Spleen (tissue), 13 donors: ENCODE measurements at regions of chr22 and their contacts with region 1.

Region 1: DNA sequence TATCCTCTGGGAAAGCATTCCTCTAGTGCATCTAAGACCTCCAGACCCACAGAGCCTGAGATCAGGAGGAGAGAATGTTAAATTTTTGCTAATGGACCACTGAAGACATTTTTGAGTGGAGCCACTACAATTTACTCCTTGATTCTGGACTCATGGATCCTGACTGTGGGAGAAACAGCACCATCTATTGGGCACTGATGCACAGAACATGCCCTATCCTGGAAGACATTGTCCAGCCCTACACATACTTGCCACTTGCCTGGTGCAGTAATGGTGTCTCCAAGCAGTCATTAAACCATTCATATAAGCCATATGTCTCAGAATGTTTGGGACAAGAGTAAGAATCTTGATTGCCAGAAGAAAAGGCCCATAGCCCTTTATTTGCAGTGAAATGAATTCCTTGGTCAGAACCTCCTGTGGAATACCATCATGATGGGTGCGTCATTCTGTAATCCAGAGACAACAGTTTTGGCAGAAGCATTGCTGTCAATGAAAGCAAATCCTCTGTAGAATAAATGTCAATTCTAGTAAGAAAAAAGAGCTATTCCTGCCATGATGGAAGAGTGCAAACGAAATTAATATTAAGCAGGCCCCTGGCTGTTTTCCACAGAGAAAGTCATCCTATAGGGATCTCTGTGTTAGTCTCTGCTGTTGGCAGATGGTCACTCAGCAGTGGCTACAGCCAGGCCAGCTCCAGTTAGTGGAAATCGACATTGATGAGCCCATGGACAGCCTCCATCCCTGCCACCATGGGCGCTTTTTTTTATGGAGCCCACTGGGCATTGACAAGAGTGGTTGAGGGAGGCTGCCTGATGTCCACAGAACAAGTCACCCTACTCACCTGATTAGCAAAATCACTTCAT is 43.5 kb downstream of the GGTLC2 start:
- DNase-seq: no peak
- H3K4me3 ChIP-seq: no peak overlapping the region
- H3K27ac ChIP-seq: peak overlapping the region in 3 of 8 donors; percentile 41 to 67 (median 50)
- H3K4me1 ChIP-seq: peaks cover 2 to 51% (median 36%) of the 10 kb centered on the region in 6 donors
- H3K27me3 ChIP-seq: no peaks in the 10 kb centered on the region
- CTCF ChIP-seq: peak in 10 of 11 experiments; percentile 20 to 81 (median 66)
- POLR2A ChIP-seq: no peak

Region 2: DNA sequence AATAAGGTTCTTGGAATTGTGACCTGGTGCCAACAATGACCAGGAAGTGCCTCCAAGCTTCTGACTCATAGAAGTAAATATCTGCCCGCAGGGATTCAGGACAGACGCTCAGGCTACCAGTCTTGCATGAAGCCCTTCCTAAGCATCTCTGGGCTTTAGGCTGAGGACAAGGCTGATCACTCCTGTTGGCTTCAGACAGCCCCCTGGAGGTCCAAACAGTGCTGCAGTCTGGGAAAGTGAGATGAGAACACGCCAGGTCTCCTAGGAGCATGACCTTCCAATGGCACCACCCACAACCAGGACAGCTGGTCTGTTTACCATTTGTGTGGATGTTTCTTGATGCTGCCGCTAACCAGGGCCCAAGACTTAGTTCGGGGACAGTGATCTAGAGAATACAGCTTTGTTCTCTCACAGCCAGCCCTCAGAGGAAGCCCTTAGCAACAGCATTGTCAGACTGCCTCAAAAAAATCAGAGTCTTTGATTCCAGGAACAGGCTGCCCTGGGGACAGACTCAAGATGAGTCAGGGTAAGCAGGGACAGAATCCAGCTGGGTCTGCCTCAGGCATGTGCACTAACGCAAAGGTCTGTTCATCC is 290.5 kb before region 1 on chr22:
- intact Hi-C with region 1: no loop called
- DNase-seq: no peak
- H3K4me3 ChIP-seq: no peak overlapping the region
- H3K27ac ChIP-seq: peak overlapping the region in 1 of 8 donors; percentile 79
- H3K4me1 ChIP-seq: peaks cover 0 to 22% (median 10%) of the 10 kb centered on the region in 6 donors
- H3K27me3 ChIP-seq: no peaks in the 10 kb centered on the region
- CTCF ChIP-seq: no peak
- POLR2A ChIP-seq: no peak

Region 3: DNA sequence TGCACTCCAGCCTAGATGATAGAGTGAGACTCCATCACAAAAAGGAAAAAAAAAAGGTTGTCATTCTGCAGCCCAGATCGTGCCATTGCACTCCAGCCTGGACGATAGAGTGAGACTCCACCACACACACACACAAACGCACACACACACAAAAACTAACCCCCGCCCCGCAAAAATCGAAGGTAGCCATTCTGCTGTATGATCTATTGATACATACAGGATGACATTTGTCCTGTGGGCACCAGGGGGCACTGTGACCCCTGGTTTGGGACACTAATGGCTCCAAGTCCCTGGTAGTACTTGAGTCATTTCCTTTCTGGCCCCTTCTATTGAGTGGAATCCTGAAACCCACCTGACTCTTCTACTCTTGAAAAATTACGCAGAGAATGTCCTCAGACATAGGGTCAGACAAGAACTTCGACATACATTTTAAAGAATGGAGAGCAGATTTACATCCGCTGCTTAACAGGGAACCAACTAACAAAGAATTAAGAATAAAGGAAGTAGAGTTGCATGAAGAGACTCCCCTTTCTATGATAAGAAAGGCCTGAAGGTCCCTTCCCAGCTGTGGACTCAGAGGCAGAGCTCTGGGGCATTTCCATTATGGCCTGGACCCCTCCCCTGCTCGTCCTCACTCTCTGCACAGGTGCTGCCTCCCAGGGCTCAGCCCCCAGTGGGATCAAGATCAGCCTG is 93.8 kb before region 1 on chr22:
- intact Hi-C with region 1: loop called (anchors 10 kb)
- DNase-seq: peak; percentile 83
- H3K4me3 ChIP-seq: no peak overlapping the region
- H3K27ac ChIP-seq: no peak overlapping the region
- H3K4me1 ChIP-seq: peaks cover 0 to 6% (median 0%) of the 10 kb centered on the region in 6 donors
- H3K27me3 ChIP-seq: peaks cover 0 to 8% (median 0%) of the 10 kb centered on the region in 7 donors
- CTCF ChIP-seq: peak; percentile 49 to 75 (median 68)
- POLR2A ChIP-seq: no peak

Region 4: GRCh38 chr22:22818861-22819855 is 131.3 kb after region 1 on chr22:
- intact Hi-C with region 1: no loop called
- DNase-seq: peak; percentile 81
- H3K4me3 ChIP-seq: peak overlapping the region in 2 of 8 donors; percentile 13 to 51
- H3K27ac ChIP-seq: peak overlapping the region in 6 of 8 donors; percentile 53 to 87 (median 72)
- H3K4me1 ChIP-seq: peaks cover 11 to 89% (median 63%) of the 10 kb centered on the region in 6 donors
- H3K27me3 ChIP-seq: no peaks in the 10 kb centered on the region
- CTCF ChIP-seq: no peak
- POLR2A ChIP-seq: no peak

Region 5: GRCh38 chr22:23786752-23787599 is 1099.1 kb after region 1 on chr22 and contains the start of gene SMARCB1:
- intact Hi-C with region 1: no loop called
- DNase-seq: peak; percentile 96
- H3K4me3 ChIP-seq: peak within 1 kb of the TSS; percentile 58 to 93 (median 72)
- H3K27ac ChIP-seq: peak within 1 kb of the TSS; percentile 96 to 100 (median 99)
- H3K4me1 ChIP-seq: peaks cover 18 to 82% (median 43%) of the 10 kb centered on the region in 6 donors
- H3K27me3 ChIP-seq: no peaks in the 10 kb centered on the region
- CTCF ChIP-seq: no peak
- POLR2A ChIP-seq: peak; percentile 8 to 50 (median 39)
- total RNA-seq, gene SMARCB1: 72.8 to 166 (median 84.6) TPM